H1 (cell line): ENCODE measurements at regions of chr16 and their contacts with region 1.

Region 1: GRCh38 chr16:79334127-79334526 is 266.4 kb downstream of the MAF start:
- DNase-seq: peak in 1 of 2 experiments; percentile 82
- H3K4me3 ChIP-seq: no peak overlapping the region
- H3K27ac ChIP-seq: no peak overlapping the region
- H3K4me1 ChIP-seq: peaks cover 0 to 3% (median 2%) of the 10 kb centered on the region in 4 experiments; a peak in 5 of 7 replicates
- H3K27me3 ChIP-seq: no peaks in the 10 kb centered on the region
- CTCF ChIP-seq: peak; percentile 63 to 88 (median 82)
- EP300 ChIP-seq: no peak
- POLR2A ChIP-seq: no peak
- RAD21 ChIP-seq: peak; percentile 56 to 65

Region 2: GRCh38 chr16:79229361-79229760 is 104.8 kb before region 1 on chr16:
- CTCF ChIA-PET with region 1: no interaction called
- POLR2A ChIA-PET with region 1: no interaction called
- DNase-seq: no peak
- H3K4me3 ChIP-seq: no peak overlapping the region
- H3K27ac ChIP-seq: no peak overlapping the region
- H3K4me1 ChIP-seq: no peaks in the 10 kb centered on the region
- H3K27me3 ChIP-seq: no peaks in the 10 kb centered on the region
- CTCF ChIP-seq: no peak
- EP300 ChIP-seq: no peak
- POLR2A ChIP-seq: no peak
- RAD21 ChIP-seq: no peak

Region 3: GRCh38 chr16:79294568-79294967 is 39.6 kb before region 1 on chr16:
- CTCF ChIA-PET with region 1: interaction called, 12 read pairs
- POLR2A ChIA-PET with region 1: interaction called, 3 read pairs
- DNase-seq: no peak
- H3K4me3 ChIP-seq: no peak overlapping the region
- H3K27ac ChIP-seq: no peak overlapping the region
- H3K4me1 ChIP-seq: peaks cover 12 to 18% (median 14%) of the 10 kb centered on the region in 4 experiments
- H3K27me3 ChIP-seq: peaks cover 0 to 6% (median 0%) of the 10 kb centered on the region in 4 experiments; a peak in 1 of 7 replicates
- CTCF ChIP-seq: no peak
- EP300 ChIP-seq: no peak
- POLR2A ChIP-seq: no peak
- RAD21 ChIP-seq: no peak

Region 4: DNA sequence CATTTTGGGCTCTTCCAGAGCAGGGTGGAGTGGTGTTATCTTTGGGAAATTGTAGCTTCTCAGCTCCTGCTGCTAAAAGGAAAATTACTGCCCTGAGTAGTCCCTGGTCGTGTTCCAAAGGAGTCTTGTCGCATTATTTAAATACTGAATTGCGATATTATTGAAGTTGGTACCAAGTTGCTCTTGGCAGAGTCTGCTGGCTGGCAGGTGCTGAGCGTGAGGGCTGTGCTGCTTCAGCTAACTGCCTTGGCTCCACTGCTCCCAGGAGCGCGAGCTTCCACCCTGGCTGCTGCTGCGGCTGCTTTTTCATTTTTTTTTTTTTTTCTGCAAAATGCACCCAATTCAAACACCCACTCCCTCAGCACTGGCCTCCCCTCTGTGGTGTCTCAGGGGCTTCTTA is 23.4 kb before region 1 on chr16:
- CTCF ChIA-PET with region 1: interaction called, 10 read pairs
- POLR2A ChIA-PET with region 1: interaction called, 3 read pairs
- DNase-seq: no peak
- H3K4me3 ChIP-seq: no peak overlapping the region
- H3K27ac ChIP-seq: no peak overlapping the region
- H3K4me1 ChIP-seq: peaks cover 0 to 9% (median 1%) of the 10 kb centered on the region in 4 experiments; a peak in 3 of 7 replicates
- H3K27me3 ChIP-seq: no peaks in the 10 kb centered on the region
- CTCF ChIP-seq: no peak
- EP300 ChIP-seq: no peak
- POLR2A ChIP-seq: no peak
- RAD21 ChIP-seq: no peak

Region 5: GRCh38 chr16:79347277-79347676 is 13.2 kb after region 1 on chr16:
- CTCF ChIA-PET with region 1: interaction called, 77 read pairs
- POLR2A ChIA-PET with region 1: no interaction called
- DNase-seq: peak in 1 of 2 experiments; percentile 48
- H3K4me3 ChIP-seq: no peak overlapping the region
- H3K27ac ChIP-seq: no peak overlapping the region
- H3K4me1 ChIP-seq: peaks cover 6 to 22% (median 12%) of the 10 kb centered on the region in 4 experiments
- H3K27me3 ChIP-seq: no peaks in the 10 kb centered on the region
- CTCF ChIP-seq: no peak
- EP300 ChIP-seq: no peak
- POLR2A ChIP-seq: no peak
- RAD21 ChIP-seq: no peak